Endothelial cell of umbilical vein (primary cell): ENCODE measurements at regions of chr3 and their contacts with region 1.

Region 1: GRCh38 chr3:144660186-144660585 is 688.6 kb downstream of the DIPK2A start:
- DNase-seq: no peak
- H3K4me3 ChIP-seq: no peak overlapping the region
- H3K27ac ChIP-seq: no peak overlapping the region
- H3K4me1 ChIP-seq: no peaks in the 10 kb centered on the region
- H3K27me3 ChIP-seq: no peaks in the 10 kb centered on the region
- CTCF ChIP-seq: no peak
- POLR2A ChIP-seq: no peak

Region 2: GRCh38 chr3:144643771-144644198 is 16.4 kb before region 1 on chr3:
- CTCF ChIA-PET with region 1: no interaction called
- POLR2A ChIA-PET with region 1: no interaction called
- dilution Hi-C with region 1: no loop called
- intact Hi-C with region 1: loop called (anchors 2 kb)
- DNase-seq: no peak
- H3K4me3 ChIP-seq: no peak overlapping the region
- H3K27ac ChIP-seq: no peak overlapping the region
- H3K4me1 ChIP-seq: no peaks in the 10 kb centered on the region
- H3K27me3 ChIP-seq: no peaks in the 10 kb centered on the region
- CTCF ChIP-seq: no peak
- POLR2A ChIP-seq: no peak

Region 3: DNA sequence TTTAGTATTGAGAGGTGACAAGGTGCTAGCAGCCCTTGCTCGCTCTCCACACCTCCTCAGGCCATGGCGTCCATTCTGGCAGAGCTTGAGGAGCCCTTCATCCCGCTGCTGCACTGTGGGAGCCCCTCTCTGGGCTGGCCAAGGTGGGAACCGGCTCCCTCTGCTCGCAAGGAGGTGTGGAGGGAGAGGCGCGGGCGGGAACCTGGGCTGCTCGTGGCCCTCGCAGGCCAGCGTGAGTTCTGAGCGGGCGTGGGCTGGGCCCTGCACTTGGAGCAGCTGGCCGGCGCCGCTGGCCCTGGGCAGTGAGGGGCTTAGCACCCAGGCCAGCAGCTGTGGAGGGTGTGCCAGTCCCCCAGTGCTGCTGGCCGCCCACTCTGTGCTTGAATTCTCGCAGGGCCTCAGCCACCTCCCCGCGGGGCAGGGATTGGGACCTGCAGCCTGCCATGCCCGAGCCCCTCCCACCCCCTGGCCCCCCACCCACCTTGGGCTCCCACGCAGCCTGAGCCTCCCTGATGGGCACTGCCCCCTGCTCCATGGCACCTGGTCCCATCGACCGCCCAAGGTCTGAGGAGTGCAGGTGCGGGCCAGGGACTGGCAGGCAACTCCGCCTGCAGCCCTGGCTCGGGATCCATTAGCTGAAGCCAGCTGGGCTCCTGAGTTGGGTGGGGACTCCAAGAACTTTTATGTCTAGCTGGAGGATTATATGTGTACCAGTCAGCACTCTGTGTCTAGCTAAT is 96.7 kb after region 1 on chr3:
- CTCF ChIA-PET with region 1: no interaction called
- POLR2A ChIA-PET with region 1: no interaction called
- dilution Hi-C with region 1: no loop called
- intact Hi-C with region 1: no loop called
- DNase-seq: no peak
- H3K4me3 ChIP-seq: no peak overlapping the region
- H3K27ac ChIP-seq: no peak overlapping the region
- H3K4me1 ChIP-seq: no peaks in the 10 kb centered on the region
- H3K27me3 ChIP-seq: no peaks in the 10 kb centered on the region
- CTCF ChIP-seq: no peak
- POLR2A ChIP-seq: no peak

Region 4: DNA sequence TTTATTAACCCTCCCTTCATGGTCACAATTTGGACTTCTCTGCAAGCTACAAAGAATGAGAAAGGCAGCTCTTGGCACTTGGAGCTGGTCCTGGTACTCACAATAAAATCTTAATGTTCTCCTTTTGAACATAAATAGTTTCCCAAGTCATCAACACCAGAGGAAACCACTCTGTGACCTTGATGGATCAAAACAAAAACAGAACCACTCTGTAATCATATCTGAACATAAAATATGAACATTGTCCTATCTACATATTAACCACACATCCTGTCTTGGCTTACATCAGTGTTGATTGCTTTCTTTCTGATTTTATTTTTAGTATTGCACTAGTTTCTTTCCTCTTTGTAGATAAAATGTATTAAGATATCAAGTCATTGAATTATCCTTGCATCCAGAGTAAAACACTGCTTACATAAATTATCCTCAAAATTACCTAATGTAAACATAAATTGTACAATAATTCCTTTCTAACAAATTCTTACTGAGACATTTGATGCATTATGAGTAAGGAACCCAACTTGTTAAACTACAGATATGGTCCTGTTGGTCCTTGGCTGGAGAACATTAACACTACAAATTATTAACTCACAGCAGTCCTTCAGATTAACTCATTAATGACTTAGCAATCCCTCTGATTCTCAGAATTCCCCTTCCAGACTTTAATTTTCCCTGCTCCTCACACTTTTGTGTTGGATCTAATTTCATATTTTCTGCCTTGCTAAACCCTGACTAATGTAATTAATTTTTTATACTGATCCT is 171.9 kb after region 1 on chr3:
- CTCF ChIA-PET with region 1: no interaction called
- POLR2A ChIA-PET with region 1: no interaction called
- dilution Hi-C with region 1: no loop called
- intact Hi-C with region 1: no loop called
- DNase-seq: peak; percentile 90
- H3K4me3 ChIP-seq: no peak overlapping the region
- H3K27ac ChIP-seq: peak overlapping the region; percentile 28
- H3K4me1 ChIP-seq: peaks cover 18% of the 10 kb centered on the region
- H3K27me3 ChIP-seq: no peaks in the 10 kb centered on the region
- CTCF ChIP-seq: no peak
- POLR2A ChIP-seq: no peak

Region 5: DNA sequence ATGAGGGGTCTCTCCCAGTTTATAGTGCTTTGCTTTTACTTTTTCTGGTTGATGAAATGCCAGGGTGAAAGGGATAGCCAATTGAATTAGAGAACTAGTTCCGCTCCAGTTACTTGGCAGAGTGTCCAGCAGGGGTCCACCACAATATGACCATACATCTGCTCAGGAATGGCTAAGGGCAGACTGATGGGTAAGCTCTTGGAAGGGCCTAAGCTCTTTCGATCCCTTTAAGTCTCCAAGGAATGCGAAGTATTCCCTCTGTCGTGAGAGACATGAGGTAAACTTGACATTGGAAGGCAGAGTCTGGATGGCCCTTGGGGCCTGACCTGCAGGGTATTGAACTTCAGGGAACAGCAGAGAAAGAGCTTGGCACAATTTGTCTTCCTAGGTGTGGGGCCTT is 695.0 kb after region 1 on chr3:
- CTCF ChIA-PET with region 1: no interaction called
- POLR2A ChIA-PET with region 1: no interaction called
- dilution Hi-C with region 1: no loop called
- intact Hi-C with region 1: no loop called
- DNase-seq: no peak
- H3K4me3 ChIP-seq: no peak overlapping the region
- H3K27ac ChIP-seq: no peak overlapping the region
- H3K4me1 ChIP-seq: no peaks in the 10 kb centered on the region
- H3K27me3 ChIP-seq: no peaks in the 10 kb centered on the region
- CTCF ChIP-seq: no peak
- POLR2A ChIP-seq: no peak